Endothelial cell of umbilical vein (primary cell): ENCODE measurements at regions of chr5 and their contacts with region 1.

Region 1: DNA sequence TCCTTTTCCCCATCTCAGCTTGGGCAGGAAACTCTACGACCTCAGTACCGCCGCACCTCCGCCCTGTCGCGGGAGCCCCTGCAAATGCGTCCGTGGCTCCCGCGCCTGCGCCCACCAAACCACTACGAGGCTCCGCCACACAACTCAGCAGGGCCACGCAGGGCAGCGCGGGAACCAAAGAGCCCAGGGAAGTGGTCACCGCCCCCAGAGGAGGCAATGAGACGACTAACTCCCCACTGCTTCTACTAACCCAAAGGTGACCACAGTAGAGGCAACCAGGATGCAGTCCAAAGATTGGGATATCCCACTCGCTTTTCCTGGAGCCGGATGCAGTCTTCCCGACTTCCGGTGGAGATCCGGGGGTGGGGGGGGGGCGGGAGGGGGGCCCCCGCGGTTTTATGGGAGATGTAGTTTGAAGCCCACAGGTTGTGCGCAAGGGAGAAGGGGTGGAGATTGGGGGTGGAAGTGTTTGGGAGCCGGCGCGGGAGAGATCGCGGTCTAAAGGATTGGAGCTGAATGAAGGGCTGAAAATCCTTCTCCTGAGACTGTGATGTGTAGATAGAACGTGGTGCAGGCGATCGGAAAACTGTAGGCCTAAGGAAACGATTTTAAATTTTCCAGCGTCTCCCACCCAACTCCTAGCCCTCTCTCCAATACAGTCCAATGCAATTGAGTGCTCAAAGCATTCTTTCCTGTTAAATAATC is at the start of gene NUDT12:
- DNase-seq: peak; percentile 86
- H3K4me3 ChIP-seq: peak within 1 kb of the TSS; percentile 84 to 97 (median 87)
- H3K27ac ChIP-seq: peak within 1 kb of the TSS; percentile 75
- H3K4me1 ChIP-seq: peaks cover 8% of the 10 kb centered on the region
- H3K27me3 ChIP-seq: no peaks in the 10 kb centered on the region
- CTCF ChIP-seq: no peak
- POLR2A ChIP-seq: peak; percentile 46
- total RNA-seq, gene NUDT12: 3.6 and 4.9 TPM in 2 replicates

Region 2: GRCh38 chr5:103667068-103667467 is 104.5 kb after region 1 on chr5:
- CTCF ChIA-PET with region 1: no interaction called
- POLR2A ChIA-PET with region 1: no interaction called
- dilution Hi-C with region 1: no loop called
- intact Hi-C with region 1: loop called (anchors 1 kb)
- DNase-seq: peak; percentile 80
- H3K4me3 ChIP-seq: no peak overlapping the region
- H3K27ac ChIP-seq: peak overlapping the region; percentile 84
- H3K4me1 ChIP-seq: peaks cover 32% of the 10 kb centered on the region
- H3K27me3 ChIP-seq: no peaks in the 10 kb centered on the region
- CTCF ChIP-seq: no peak
- POLR2A ChIP-seq: no peak